ENCODE measurements at regions of chr21 and their contacts with region 1.

Region 1: DNA sequence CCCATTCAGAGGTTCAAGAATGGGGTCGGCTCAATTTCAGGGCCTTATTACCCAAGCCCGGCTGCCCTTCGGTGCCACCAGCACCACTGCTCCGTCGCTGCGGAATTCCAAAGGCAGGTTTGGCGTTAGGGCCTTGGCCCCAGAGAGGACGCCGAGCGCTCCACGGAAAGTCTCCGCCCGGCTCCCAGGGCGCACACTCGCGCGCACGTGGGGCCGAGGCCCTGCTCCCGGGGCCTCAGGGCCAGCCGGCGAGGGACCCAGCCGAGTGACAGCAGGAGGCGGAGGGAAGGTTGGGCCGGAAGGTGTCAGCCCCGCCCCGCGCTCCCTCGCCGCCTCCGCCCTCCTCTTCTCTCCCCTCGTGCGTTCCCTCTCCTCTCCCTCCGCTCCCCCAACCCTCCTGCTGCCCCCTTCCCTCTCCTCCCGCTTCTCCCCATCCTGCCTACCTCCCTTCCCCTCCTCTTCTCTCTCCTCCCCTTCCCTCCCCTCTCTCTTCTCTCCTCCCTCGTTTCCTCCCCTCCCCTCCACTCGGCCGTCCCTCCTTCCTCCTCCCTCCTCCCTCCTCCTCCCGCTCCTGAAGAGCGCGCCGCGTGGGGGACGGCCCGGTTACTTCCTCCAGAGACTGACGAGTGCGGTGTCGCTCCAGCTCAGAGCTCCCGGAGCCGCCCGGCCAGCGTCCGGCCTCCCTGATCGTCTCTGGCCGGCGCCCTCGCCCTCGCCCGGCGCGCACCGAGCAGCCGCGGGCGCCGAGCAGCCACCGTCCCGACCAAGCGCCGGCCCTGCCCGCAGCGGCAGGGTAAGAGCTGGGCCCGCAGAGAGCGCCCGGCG is at the start of gene ETS2:
- DNase-seq: peak; percentile 81
- H3K4me3 Mint-ChIP-seq: peak within 1 kb of the TSS; percentile 87
- H3K27ac Mint-ChIP-seq: peak within 1 kb of the TSS; percentile 87
- H3K4me1 Mint-ChIP-seq: peaks cover 40% of the 10 kb centered on the region
- H3K27me3 Mint-ChIP-seq: peaks cover 2% of the 10 kb centered on the region
- total RNA-seq, gene ETS2: 22.1 to 25.0 TPM

Region 2: DNA sequence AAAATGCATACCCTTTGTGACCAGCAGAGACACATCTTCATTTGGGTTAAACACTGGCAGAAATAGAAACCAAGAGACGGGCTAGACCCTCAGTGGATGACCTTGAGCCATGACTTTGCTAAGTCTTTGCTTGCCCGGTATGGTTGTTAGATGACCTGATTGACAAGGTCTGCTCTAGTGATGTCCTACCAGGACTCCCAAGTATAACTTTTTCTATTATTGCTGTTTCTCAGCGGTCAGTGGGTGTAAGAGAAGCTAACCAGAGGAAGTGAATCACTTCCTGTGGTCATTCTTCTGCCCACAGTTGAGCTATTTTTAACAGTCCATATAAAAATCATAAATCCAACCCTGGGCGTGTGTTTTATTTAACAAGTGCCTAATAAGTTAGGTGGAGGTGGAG is 126.0 kb before region 1 on chr21:
- CTCF ChIA-PET with region 1: no interaction called
- POLR2A ChIA-PET with region 1: no interaction called
- intact Hi-C with region 1: no loop called
- DNase-seq: no peak
- H3K4me3 Mint-ChIP-seq: no peak overlapping the region
- H3K27ac Mint-ChIP-seq: no peak overlapping the region
- H3K4me1 Mint-ChIP-seq: no peaks in the 10 kb centered on the region
- H3K27me3 Mint-ChIP-seq: peaks cover 23% of the 10 kb centered on the region

Region 3: GRCh38 chr21:38733973-38734546 is 71.5 kb before region 1 on chr21:
- CTCF ChIA-PET with region 1: interaction called, 4 read pairs
- POLR2A ChIA-PET with region 1: no interaction called
- intact Hi-C with region 1: loop called (anchors 2 kb)
- DNase-seq: peak; percentile 78
- H3K4me3 Mint-ChIP-seq: peak overlapping the region; percentile 65
- H3K27ac Mint-ChIP-seq: no peak overlapping the region
- H3K4me1 Mint-ChIP-seq: peaks cover 10% of the 10 kb centered on the region
- H3K27me3 Mint-ChIP-seq: peaks cover 24% of the 10 kb centered on the region

Region 4: GRCh38 chr21:38780879-38781278 is 24.7 kb before region 1 on chr21:
- CTCF ChIA-PET with region 1: interaction called, 5 read pairs
- POLR2A ChIA-PET with region 1: no interaction called
- intact Hi-C with region 1: loop called (anchors 1 kb)
- DNase-seq: no peak
- H3K4me3 Mint-ChIP-seq: no peak overlapping the region
- H3K27ac Mint-ChIP-seq: peak overlapping the region; percentile 35
- H3K4me1 Mint-ChIP-seq: peaks cover 44% of the 10 kb centered on the region
- H3K27me3 Mint-ChIP-seq: peaks cover 7% of the 10 kb centered on the region

Region 5: GRCh38 chr21:38831526-38832467 is 26.3 kb after region 1 on chr21:
- CTCF ChIA-PET with region 1: interaction called, 3 read pairs
- POLR2A ChIA-PET with region 1: no interaction called
- intact Hi-C with region 1: loop called (anchors 1 kb)
- DNase-seq: peak; percentile 76
- H3K4me3 Mint-ChIP-seq: no peak overlapping the region
- H3K27ac Mint-ChIP-seq: peak overlapping the region; percentile 69
- H3K4me1 Mint-ChIP-seq: peaks cover 16% of the 10 kb centered on the region
- H3K27me3 Mint-ChIP-seq: peaks cover 6% of the 10 kb centered on the region

Region 6: GRCh38 chr21:39022863-39023693 is 217.5 kb after region 1 on chr21:
- CTCF ChIA-PET with region 1: no interaction called
- POLR2A ChIA-PET with region 1: no interaction called
- intact Hi-C with region 1: no loop called
- DNase-seq: no peak
- H3K4me3 Mint-ChIP-seq: no peak overlapping the region
- H3K27ac Mint-ChIP-seq: no peak overlapping the region
- H3K4me1 Mint-ChIP-seq: no peaks in the 10 kb centered on the region
- H3K27me3 Mint-ChIP-seq: peaks cover 4% of the 10 kb centered on the region

Region 7: GRCh38 chr21:39183237-39184007 is 377.9 kb after region 1 on chr21 and contains the start of gene PSMG1:
- CTCF ChIA-PET with region 1: no interaction called
- POLR2A ChIA-PET with region 1: interaction called, 4 read pairs
- intact Hi-C with region 1: loop called (anchors 1 kb)
- DNase-seq: peak; percentile 95
- H3K4me3 Mint-ChIP-seq: peak within 1 kb of the TSS; percentile 98
- H3K27ac Mint-ChIP-seq: peak within 1 kb of the TSS; percentile 94
- H3K4me1 Mint-ChIP-seq: peaks cover 63% of the 10 kb centered on the region
- H3K27me3 Mint-ChIP-seq: no peaks in the 10 kb centered on the region
- total RNA-seq, gene PSMG1: 82.3 to 85.9 TPM

Region 8: DNA sequence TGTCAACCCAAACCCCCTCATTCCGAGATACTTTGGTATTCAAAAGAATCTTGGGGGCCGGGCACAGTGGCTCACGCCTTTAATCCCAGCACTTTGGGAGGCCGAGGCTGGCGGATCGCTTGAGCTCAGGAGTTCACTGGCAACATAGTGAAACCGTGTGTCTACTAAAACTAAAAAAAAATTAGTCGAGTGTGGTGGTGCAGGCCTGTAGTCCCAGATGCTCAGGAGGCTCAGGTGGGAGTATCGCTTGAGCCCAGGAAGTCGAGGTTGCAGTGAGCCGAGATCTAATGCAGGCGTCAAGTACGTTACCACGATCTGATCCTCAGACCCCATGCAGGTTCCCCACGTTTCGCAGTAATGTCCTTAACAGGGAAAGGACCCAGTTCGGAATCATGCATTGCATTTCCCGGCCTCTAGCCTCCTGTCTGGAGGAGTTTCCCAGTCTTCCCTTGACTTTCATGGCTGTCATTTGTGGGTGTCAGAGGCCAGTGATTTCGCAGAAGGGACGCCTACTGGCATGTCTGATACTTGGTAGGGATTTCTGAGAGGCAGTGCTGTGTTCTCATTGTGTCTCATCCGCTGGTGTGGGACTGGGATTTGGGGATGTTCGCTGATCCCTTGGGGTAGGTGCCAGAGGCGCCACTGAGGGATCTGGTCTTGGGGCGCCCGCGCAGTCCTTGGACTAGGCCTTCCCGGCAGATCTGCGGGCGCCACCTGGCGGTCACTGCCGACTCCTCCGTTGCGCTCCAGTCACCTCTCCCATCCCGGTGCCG is 582.7 kb after region 1 on chr21:
- CTCF ChIA-PET with region 1: no interaction called
- POLR2A ChIA-PET with region 1: no interaction called
- intact Hi-C with region 1: loop called (anchors 10 kb)
- DNase-seq: peak; percentile 92
- H3K4me3 Mint-ChIP-seq: peak overlapping the region; percentile 80
- H3K27ac Mint-ChIP-seq: peak overlapping the region; percentile 87
- H3K4me1 Mint-ChIP-seq: peaks cover 32% of the 10 kb centered on the region
- H3K27me3 Mint-ChIP-seq: no peaks in the 10 kb centered on the region

Measured in activated CD4-positive, alpha-beta memory T cell treated with anti-CD3 and anti-CD28 coated beads for 36 hours (primary cell).